PC-9 (cell line): ENCODE measurements at regions of chr12 and their contacts with region 1.

Region 1: GRCh38 chr12:125983093-125983783 is 918.0 kb downstream of the AACS start:
- DNase-seq: peak; percentile 72 to 85
- H3K4me3 ChIP-seq: peak overlapping the region; percentile 64
- H3K27ac ChIP-seq: peak overlapping the region; percentile 63
- H3K4me1 ChIP-seq: 0 out of 2 replicates have a peak, but pooled peaks cover 8% of the 10 kb centered on the region
- H3K27me3 ChIP-seq: no peaks in the 10 kb centered on the region
- CTCF ChIP-seq: no peak

Region 2: GRCh38 chr12:125183187-125184067 is 799.8 kb before region 1 on chr12:
- CTCF ChIA-PET with region 1: no interaction called
- POLR2A ChIA-PET with region 1: no interaction called
- intact Hi-C with region 1: no loop called
- DNase-seq: peak; percentile 59 to 74
- H3K4me3 ChIP-seq: no peak overlapping the region
- H3K27ac ChIP-seq: no peak overlapping the region
- H3K4me1 ChIP-seq: no peaks in the 10 kb centered on the region
- H3K27me3 ChIP-seq: peaks cover 61% of the 10 kb centered on the region
- CTCF ChIP-seq: peak; percentile 98

Region 3: DNA sequence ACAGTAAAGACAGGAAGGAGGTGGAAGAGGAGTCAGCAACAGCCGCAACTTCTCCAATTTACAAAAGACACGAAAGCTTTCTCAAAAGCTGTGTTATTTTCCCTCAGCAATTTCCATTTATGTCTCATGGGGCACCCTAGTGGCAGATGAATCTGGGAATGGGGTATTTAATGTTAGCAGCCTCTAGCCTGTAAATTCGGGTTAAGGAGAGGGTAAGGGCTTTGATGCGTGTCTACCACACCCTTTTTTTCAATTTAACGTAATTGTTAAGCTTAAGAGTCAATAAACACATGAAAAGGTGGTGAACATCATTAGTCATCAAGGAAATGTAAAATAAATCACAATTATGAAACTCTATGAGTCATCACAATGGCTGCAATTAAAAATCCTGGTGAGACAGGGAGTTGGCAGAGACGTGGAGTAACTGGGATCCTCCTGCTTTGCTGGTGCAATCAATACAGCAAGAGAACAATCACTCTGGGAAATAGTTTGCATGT is 68.4 kb after region 1 on chr12:
- CTCF ChIA-PET with region 1: no interaction called
- POLR2A ChIA-PET with region 1: no interaction called
- intact Hi-C with region 1: loop called (anchors 1 kb)
- DNase-seq: peak; percentile 52 to 91
- H3K4me3 ChIP-seq: no peak overlapping the region
- H3K27ac ChIP-seq: peak overlapping the region; percentile 93
- H3K4me1 ChIP-seq: peaks cover 38% of the 10 kb centered on the region
- H3K27me3 ChIP-seq: no peaks in the 10 kb centered on the region
- CTCF ChIP-seq: peak; percentile 54; the same call in 1 of the 2 replicates